HEK293 (cell line): ENCODE measurements at regions of chr12 and their contacts with region 1.

Region 1: GRCh38 chr12:47021298-47021697 is 58.1 kb upstream of the PCED1B start:
- H3K4me3 ChIP-seq: no peak overlapping the region
- H3K27ac ChIP-seq: no peak overlapping the region
- H3K4me1 ChIP-seq: no peaks in the 10 kb centered on the region
- CTCF ChIP-seq: no peak

Region 2: GRCh38 chr12:46342562-46343033 is 678.7 kb before region 1 on chr12:
- CTCF ChIA-PET with region 1: interaction called, 15 read pairs
- POLR2A ChIA-PET with region 1: no interaction called
- H3K4me3 ChIP-seq: no peak overlapping the region
- H3K27ac ChIP-seq: no peak overlapping the region
- H3K4me1 ChIP-seq: no peaks in the 10 kb centered on the region; the same call in 1 of the 2 replicates
- CTCF ChIP-seq: peak; percentile 67; the same call in 1 of the 2 replicates

Region 3: DNA sequence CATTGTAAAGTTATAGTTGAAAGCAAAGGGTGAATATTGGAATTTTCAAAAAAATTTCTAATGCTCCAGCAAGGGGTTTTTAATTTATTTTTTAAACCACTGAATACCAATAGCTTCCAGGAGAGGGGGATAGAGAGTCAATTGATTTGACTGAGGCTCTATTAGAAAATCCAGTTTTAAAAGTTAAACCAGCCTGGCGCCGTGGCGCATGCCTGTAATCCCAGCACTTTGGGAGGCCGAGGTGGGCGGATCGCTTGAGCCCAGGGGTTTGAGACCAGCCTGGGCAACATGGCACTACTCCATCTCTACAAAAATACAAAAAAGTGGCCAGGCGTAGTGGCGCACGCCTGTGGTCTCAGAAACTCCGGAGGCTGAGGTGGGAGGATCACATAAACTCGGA is 345.6 kb before region 1 on chr12:
- CTCF ChIA-PET with region 1: interaction called, 12 read pairs
- POLR2A ChIA-PET with region 1: no interaction called
- H3K4me3 ChIP-seq: no peak overlapping the region
- H3K27ac ChIP-seq: no peak overlapping the region
- H3K4me1 ChIP-seq: no peaks in the 10 kb centered on the region
- CTCF ChIP-seq: no peak

Region 4: DNA sequence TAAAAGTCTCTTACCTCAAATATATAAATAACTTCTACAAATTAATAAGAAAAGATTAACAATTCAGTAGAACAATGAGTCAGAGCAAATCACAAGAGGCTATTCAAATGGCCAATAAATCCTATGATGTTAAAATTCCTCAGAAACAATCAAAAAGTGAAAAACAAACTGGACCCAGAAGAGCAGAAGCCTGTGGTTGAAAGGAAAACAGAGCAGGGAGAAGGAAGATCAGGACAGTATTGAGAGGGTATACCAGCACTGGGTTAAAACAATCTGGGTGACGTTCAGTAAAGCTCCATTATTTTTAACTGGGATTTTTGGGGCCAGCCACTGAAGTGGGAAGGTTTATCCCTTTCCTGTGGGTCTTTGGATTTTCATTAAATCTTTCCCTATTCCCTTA is 18.5 kb after region 1 on chr12:
- CTCF ChIA-PET with region 1: no interaction called
- POLR2A ChIA-PET with region 1: no interaction called
- H3K4me3 ChIP-seq: no peak overlapping the region
- H3K27ac ChIP-seq: no peak overlapping the region
- H3K4me1 ChIP-seq: no peaks in the 10 kb centered on the region
- CTCF ChIP-seq: no peak

Region 5: DNA sequence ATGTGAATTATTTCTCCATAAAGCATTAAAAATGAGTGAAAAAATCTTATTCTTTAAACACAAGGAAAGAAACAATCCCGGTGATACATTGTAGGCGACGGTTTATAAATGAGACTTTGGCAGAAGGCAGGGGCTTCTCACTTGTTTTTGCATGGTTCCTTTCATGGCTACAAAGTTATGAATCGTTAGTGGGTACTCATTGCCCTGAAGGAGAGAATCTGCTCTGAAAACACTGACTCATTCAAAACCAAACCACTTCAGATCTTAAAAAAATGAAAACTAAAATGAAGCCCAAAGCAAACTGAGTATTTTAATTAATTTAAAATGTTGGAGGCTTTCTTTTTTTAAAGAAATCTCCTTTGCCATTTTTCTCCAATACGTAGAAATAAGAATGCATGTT is 99.8 kb after region 1 on chr12:
- CTCF ChIA-PET with region 1: no interaction called
- POLR2A ChIA-PET with region 1: no interaction called
- H3K4me3 ChIP-seq: no peak overlapping the region
- H3K27ac ChIP-seq: no peak overlapping the region
- H3K4me1 ChIP-seq: no peaks in the 10 kb centered on the region
- CTCF ChIP-seq: no peak

Region 6: GRCh38 chr12:47397664-47398281 is 376.5 kb after region 1 on chr12:
- CTCF ChIA-PET with region 1: interaction called, 11 read pairs
- POLR2A ChIA-PET with region 1: no interaction called
- H3K4me3 ChIP-seq: no peak overlapping the region
- H3K27ac ChIP-seq: no peak overlapping the region
- H3K4me1 ChIP-seq: 0 out of 2 replicates have a peak, but pooled peaks cover 3% of the 10 kb centered on the region
- CTCF ChIP-seq: no peak; the same call in none of the 2 replicates

Region 7: GRCh38 chr12:48279101-48279500 is 1257.8 kb after region 1 on chr12:
- CTCF ChIA-PET with region 1: no interaction called
- POLR2A ChIA-PET with region 1: no interaction called
- H3K4me3 ChIP-seq: no peak overlapping the region
- H3K27ac ChIP-seq: no peak overlapping the region
- H3K4me1 ChIP-seq: no peaks in the 10 kb centered on the region
- CTCF ChIP-seq: no peak